Dendritic cell treated with granulocyte-macrophage colony-stimulating factor and Interleukin-4, amounts not matched to agents 40 ng/mL and 50 ng/mL, for 4 days (primary cell): ENCODE measurements at regions of chr16 and their contacts with region 1.

Region 1: GRCh38 chr16:70653809-70654771 is 7.7 kb downstream of the IL34 start:
- H3K4me3 Mint-ChIP-seq: peak overlapping the region; percentile 37
- H3K27ac Mint-ChIP-seq: peak overlapping the region; percentile 24
- H3K4me1 Mint-ChIP-seq: peaks cover 6% of the 10 kb centered on the region
- H3K27me3 Mint-ChIP-seq: peaks cover 4% of the 10 kb centered on the region

Region 2: GRCh38 chr16:70331588-70332358 is 322.3 kb before region 1 on chr16:
- intact Hi-C with region 1: loop called (anchors 5 kb)
- H3K4me3 Mint-ChIP-seq: no peak overlapping the region
- H3K27ac Mint-ChIP-seq: no peak overlapping the region
- H3K4me1 Mint-ChIP-seq: peaks cover 5% of the 10 kb centered on the region
- H3K27me3 Mint-ChIP-seq: no peaks in the 10 kb centered on the region

Region 3: DNA sequence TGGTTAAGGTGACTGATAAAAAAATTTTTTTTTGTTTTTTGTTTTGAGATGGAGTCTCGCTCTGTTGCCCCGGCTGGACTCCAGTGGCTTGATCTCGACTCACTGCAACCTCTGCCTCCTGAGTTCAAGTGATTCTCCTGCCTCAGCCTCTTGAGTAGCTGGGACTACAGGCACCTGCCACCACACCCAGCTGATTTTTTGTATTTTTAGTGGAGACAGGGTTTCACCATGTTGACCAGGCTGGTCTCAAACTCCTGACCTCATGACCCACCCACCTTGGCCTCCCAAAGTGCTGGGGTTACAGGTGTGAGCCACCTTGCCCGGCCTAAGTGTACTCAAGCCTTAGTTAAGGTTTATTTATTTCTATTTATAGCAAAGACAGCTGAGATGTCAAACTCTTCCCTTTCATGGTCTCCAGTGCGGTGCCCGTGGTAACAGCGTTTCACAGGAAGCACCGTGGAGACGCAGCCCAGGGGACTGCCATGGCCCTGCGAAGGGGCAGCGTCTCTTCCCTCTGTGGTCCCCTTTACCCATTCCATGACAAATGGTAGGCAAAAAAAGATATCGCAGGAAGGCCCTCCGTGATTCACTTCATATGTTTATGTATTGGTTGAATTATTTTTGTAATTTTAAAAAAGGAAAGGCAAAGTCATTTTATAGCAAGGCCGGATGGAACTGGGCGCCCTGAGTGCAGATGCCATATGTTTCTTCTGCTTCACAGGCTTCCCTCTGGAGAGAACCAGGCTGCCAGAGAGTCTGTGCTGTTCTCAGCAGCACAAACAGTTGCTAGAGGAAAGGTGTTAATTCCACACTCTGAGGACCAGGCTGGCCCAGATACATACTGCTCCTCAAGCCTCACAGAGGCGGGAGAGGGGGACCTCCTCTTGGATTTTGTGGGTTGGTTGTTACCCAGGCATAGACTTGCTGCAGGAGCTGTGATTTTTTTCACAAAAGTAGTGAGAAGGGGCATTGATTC is 278.2 kb before region 1 on chr16:
- intact Hi-C with region 1: loop called (anchors 10 kb)
- H3K4me3 Mint-ChIP-seq: no peak overlapping the region
- H3K27ac Mint-ChIP-seq: no peak overlapping the region
- H3K4me1 Mint-ChIP-seq: peaks cover 21% of the 10 kb centered on the region
- H3K27me3 Mint-ChIP-seq: no peaks in the 10 kb centered on the region

Region 4: GRCh38 chr16:70679666-70680494 is 25.8 kb after region 1 on chr16:
- intact Hi-C with region 1: no loop called
- H3K4me3 Mint-ChIP-seq: no peak overlapping the region
- H3K27ac Mint-ChIP-seq: no peak overlapping the region
- H3K4me1 Mint-ChIP-seq: no peaks in the 10 kb centered on the region
- H3K27me3 Mint-ChIP-seq: peaks cover 10% of the 10 kb centered on the region